ENCODE measurements at regions of chr12 and their contacts with region 1.

Region 1: DNA sequence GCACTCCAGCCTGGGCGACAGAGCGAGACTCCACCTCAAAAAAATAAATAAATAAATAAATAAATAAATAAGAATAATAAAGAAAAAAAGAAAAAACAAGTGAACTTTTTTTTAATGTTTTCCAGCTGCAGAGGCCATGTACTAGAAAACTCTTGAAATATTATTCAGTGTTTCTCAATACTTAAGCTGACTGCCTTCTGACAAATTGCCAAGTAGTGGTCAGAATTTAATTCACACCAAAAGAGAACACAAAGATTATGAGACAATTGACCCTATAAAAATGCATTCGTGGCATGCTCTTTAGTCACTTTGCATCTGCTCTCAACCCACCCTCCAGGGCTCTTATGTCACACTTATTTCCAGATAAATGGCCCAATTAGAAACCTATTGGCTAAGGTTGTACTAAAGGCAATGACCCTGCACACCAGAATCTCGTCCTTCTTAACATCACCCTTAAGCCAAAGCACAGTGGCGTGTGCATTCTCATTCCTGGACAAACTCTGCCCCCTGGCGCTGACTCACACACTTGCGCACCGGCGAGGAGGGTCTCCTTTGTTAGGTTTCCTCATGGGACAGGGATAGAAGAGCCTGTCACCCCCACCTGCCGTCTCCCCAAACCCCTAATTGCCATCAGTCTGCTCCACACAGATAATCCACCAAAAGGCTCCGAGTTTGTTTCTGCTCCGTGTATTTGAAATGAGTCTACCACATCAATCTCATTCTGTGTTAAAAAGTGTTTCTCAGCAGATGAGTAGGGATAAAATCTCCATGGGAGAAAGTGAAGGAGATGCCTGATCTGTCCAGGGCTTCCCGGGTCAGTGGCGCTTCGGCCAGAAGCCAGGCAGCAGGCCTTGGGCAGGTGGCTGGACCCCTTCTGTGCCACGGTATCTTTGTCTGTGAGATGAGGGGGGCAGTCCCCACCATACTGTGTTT is 73.1 kb upstream of the CEP83 start:
- DNase-seq: peak; percentile 78
- ATAC-seq: peak; percentile 81
- H3K4me3 ChIP-seq: no peak overlapping the region
- H3K4me3 Mint-ChIP-seq: no peak overlapping the region
- H3K27ac ChIP-seq: no peak overlapping the region
- H3K27ac Mint-ChIP-seq: no peak overlapping the region
- H3K4me1 ChIP-seq: no peaks in the 10 kb centered on the region
- H3K4me1 Mint-ChIP-seq: peaks cover 5% of the 10 kb centered on the region
- H3K27me3 ChIP-seq: no peaks in the 10 kb centered on the region
- H3K27me3 Mint-ChIP-seq: peaks cover 3% of the 10 kb centered on the region
- CTCF ChIP-seq: peak; percentile 81

Region 2: GRCh38 chr12:94112132-94112531 is 420.6 kb before region 1 on chr12:
- CTCF ChIA-PET with region 1: no interaction called
- POLR2A ChIA-PET with region 1: no interaction called
- intact Hi-C with region 1: no loop called
- DNase-seq: no peak
- ATAC-seq: no peak
- H3K4me3 ChIP-seq: no peak overlapping the region
- H3K4me3 Mint-ChIP-seq: no peak overlapping the region
- H3K27ac ChIP-seq: no peak overlapping the region
- H3K27ac Mint-ChIP-seq: no peak overlapping the region
- H3K4me1 ChIP-seq: no peaks in the 10 kb centered on the region
- H3K4me1 Mint-ChIP-seq: no peaks in the 10 kb centered on the region
- H3K27me3 ChIP-seq: no peaks in the 10 kb centered on the region
- H3K27me3 Mint-ChIP-seq: peaks cover 9% of the 10 kb centered on the region
- CTCF ChIP-seq: no peak

Region 3: GRCh38 chr12:94133964-94134795 is 398.6 kb before region 1 on chr12:
- CTCF ChIA-PET with region 1: interaction called, 42 read pairs
- POLR2A ChIA-PET with region 1: no interaction called
- intact Hi-C with region 1: loop called (anchors 1 kb)
- DNase-seq: peak; percentile 74
- ATAC-seq: peak; percentile 91
- H3K4me3 ChIP-seq: no peak overlapping the region
- H3K4me3 Mint-ChIP-seq: no peak overlapping the region
- H3K27ac ChIP-seq: no peak overlapping the region
- H3K27ac Mint-ChIP-seq: no peak overlapping the region
- H3K4me1 ChIP-seq: peaks cover 3 to 10% of the 10 kb centered on the region in 2 donors
- H3K4me1 Mint-ChIP-seq: peaks cover 10% of the 10 kb centered on the region
- H3K27me3 ChIP-seq: no peaks in the 10 kb centered on the region
- H3K27me3 Mint-ChIP-seq: peaks cover 3% of the 10 kb centered on the region
- CTCF ChIP-seq: peak; percentile 89